PC-9 (cell line): ENCODE measurements at regions of chr7 and their contacts with region 1.

Region 1: DNA sequence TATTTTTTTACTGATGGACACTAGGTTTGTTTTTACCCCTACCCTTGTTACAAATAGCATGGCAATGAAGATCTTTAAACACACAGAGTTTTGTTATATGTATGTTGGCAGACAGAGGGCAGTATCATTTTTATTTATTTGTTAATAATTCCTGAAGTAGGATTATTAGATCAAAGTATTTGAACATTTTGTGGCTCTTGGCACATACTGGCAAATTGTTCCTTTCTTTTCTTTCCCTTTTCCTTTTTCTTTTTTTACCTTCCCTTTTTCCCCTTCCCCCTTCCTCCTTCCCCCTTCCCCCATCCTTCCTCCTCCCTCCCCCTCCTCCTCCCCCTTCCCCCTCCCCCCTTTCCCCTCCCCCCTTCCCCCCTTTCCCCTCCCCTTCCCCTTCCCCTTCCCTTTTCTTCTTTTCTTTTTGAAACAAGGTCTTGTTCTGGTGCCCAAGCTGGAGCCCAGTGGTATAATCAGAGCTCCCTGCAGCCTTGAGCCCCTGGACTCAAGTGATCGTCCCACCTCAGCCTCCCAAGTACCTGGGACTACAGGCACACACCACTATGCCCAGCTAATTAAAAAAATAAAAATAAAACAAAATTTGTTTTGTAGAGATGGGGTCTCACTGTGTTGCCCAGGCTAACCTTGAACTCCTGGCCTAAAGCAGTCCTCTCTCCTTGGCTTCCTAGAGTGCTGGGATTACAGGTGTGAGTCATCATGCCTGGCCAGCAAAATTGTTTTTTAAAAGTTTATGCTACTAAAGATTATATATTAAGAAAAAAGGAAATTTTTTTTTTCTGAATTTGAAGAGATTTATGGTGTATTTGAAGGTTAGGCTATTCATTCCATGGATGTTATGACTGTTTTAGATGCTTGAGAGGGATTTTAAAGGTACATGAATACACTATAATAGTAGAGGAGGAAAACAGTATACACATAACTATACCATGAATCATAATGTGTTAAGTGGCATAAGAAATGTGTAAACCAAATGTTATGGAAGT is 39.3 kb downstream of the SEPTIN7 start:
- DNase-seq: peak in 1 of 2 experiments; percentile 68
- H3K4me3 ChIP-seq: no peak overlapping the region
- H3K27ac ChIP-seq: 0 out of 2 replicates have a peak overlapping the region, but pooled peaks have one; percentile 1
- H3K4me1 ChIP-seq: 0 out of 2 replicates have a peak, but pooled peaks cover 11% of the 10 kb centered on the region
- H3K27me3 ChIP-seq: no peaks in the 10 kb centered on the region
- CTCF ChIP-seq: 0 out of 2 replicates have a peak, but pooled peaks have one; percentile 28

Region 2: DNA sequence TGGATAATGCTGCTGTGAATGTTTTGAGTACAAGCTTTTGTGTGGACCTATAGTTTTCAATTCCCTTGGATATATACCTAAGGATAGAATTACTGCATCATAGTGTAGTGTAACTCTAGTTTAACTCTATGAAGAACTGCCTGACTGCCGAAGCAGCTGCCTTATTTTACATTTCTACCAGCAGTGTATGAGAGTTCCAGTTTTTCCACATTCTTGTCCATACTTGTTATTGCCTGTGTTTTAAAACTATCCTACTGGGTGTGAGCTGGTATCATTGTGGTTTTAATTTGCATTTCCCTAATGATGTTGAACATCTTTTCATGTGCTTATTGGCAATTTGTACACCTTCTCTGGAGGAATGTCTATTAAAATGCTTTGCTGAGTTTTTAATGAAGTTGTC is 23.6 kb before region 1 on chr7:
- CTCF ChIA-PET with region 1: no interaction called
- POLR2A ChIA-PET with region 1: no interaction called
- intact Hi-C with region 1: loop called (anchors 2 kb)
- DNase-seq: no peak
- H3K4me3 ChIP-seq: no peak overlapping the region
- H3K27ac ChIP-seq: no peak overlapping the region
- H3K4me1 ChIP-seq: peaks cover 9% of the 10 kb centered on the region; the same call in 1 of the 2 replicates
- H3K27me3 ChIP-seq: no peaks in the 10 kb centered on the region
- CTCF ChIP-seq: no peak

Region 3: DNA sequence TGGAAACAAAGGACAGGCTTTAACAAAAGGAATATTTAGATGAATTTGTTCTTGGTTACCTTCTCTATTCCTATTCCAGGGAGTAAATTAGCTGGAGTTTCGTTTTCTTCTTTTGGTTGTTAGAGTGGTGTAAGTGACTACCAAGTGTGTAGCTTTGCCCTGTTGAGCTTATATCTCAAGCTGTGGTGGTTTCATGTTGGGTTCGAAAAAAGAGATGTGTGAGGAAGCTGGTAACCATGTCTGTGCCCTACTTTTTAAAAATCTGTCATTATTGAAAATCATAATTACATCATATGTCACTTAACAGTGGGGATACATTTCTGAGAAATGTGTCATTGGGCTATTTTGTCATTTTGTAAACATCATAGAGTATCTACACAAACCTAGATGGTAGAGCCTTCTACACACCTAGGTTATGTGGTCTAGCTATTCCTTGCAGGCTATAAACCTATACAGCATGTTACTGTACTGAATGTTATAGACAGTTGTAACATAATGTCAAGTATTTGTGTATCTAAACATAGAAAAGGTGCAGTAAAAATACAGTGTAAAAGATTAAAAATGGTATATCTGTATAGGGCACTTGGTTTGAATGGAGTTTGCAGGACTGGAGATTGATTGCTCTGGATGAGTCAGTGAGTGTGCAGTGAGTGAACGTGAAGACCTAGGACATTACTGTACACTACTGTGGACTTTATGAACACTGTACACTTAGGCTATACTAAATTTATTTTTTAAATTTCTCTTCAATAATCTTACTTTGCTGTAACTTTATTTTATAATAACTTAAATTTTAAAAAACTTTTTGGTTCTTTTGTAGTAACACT is 51.1 kb after region 1 on chr7:
- CTCF ChIA-PET with region 1: interaction called, 11 read pairs
- POLR2A ChIA-PET with region 1: no interaction called
- intact Hi-C with region 1: no loop called
- DNase-seq: no peak
- H3K4me3 ChIP-seq: no peak overlapping the region
- H3K27ac ChIP-seq: no peak overlapping the region
- H3K4me1 ChIP-seq: no peaks in the 10 kb centered on the region
- H3K27me3 ChIP-seq: no peaks in the 10 kb centered on the region
- CTCF ChIP-seq: no peak

Region 4: GRCh38 chr7:35906191-35906908 is 66.2 kb after region 1 on chr7:
- CTCF ChIA-PET with region 1: no interaction called
- POLR2A ChIA-PET with region 1: no interaction called
- intact Hi-C with region 1: no loop called
- DNase-seq: peak; percentile 69 to 72
- H3K4me3 ChIP-seq: no peak overlapping the region
- H3K27ac ChIP-seq: no peak overlapping the region
- H3K4me1 ChIP-seq: no peaks in the 10 kb centered on the region
- H3K27me3 ChIP-seq: no peaks in the 10 kb centered on the region
- CTCF ChIP-seq: peak; percentile 97